ENCODE measurements at regions of chr11 and their contacts with region 1.

Region 1: DNA sequence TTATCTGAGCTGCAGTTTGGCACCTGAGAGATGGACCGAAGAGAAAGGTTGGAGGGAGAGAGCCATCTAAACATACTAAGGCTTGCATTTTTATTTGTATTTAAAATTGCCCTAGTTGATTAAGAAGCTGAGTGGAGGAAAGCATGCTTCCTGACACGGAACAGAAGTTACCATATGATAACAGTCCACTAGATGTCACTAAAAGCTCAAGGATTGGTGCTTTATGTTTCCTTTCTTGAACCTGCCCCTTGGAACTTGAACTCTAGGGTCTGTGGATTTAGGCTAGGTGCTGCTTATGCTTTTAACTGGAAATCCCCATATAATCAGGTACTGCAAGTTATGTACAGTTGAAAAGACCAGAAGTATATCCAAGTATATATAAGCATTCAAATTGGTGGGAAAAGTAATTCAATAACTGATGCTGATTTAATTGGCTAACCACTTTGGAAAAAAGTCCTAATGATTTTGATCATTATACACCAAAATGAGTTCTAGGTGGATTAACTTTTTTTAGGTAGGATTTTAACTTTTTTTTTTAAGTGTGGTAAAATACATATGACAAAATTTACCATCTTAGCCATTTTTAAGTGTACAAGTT is 9.5 kb downstream of the RBMXL2 start:
- DNase-seq: no peak
- ATAC-seq: peak; percentile 41 to 52

Region 2: DNA sequence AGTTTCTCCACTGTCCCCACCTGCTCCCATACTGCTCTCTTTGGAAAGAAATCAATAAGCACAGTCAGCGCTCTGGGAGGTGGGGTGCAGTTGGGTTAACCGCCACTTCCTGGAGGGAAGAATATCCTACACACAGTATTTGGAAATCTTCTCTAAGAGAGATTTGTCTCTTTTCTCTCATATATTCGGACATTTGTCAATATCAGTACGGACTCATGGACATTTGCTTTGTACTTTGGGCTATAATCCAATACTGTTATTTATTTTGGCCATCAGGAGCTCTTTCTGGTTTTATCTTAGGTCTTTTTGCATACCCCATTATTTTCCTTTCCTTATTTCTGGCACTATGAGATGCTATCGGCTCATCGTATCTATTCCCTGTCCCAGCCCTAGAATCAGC is 64.3 kb before region 1 on chr11:
- intact Hi-C with region 1: no loop called
- DNase-seq: no peak
- ATAC-seq: no peak

Region 3: DNA sequence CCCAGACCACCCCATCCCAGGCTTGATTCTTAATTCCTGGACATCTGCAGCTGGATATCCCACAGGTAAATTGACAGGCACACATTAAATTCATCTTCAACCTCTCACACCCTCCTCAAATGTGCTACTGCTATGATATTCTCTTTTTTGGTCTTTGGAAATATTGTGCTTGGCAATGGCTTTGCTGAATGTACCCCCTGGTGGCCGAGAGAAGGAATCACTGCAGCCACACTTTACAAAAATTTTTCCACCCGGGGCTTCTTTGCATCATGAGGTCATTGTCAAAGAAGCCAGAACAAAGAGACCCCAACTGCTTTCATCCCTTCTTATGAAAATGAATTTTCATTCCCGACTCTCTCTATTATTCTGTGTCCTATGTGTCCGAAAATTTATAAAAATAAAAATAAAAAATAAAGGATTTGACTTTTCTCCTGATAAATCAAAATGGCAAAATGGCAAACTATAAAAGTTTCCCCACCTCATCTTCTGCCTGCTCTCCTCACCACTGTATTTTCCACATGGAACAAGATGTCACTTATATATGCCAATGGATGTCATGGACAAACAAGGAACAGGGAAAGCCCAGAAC is 590.0 kb after region 1 on chr11:
- intact Hi-C with region 1: loop called (anchors 5 kb)
- DNase-seq: no peak
- ATAC-seq: peak in 1 of 2 donors; percentile 36

Measured in left cardiac atrium (tissue), 4 donors.